BJ (cell line): ENCODE measurements at regions of chr6 and their contacts with region 1.

Region 1: GRCh38 chr6:52049252-52050050 is 38.0 kb downstream of the PKHD1 start:
- DNase-seq: no peak
- H3K4me3 ChIP-seq: no peak overlapping the region
- H3K27me3 ChIP-seq: no peaks in the 10 kb centered on the region; the same call in 1 of the 2 replicates
- CTCF ChIP-seq: peak; percentile 71

Region 2: GRCh38 chr6:51814418-51814817 is 235.0 kb before region 1 on chr6:
- CTCF ChIA-PET with region 1: no interaction called
- POLR2A ChIA-PET with region 1: no interaction called
- DNase-seq: no peak
- H3K4me3 ChIP-seq: no peak overlapping the region
- H3K27me3 ChIP-seq: no peaks in the 10 kb centered on the region
- CTCF ChIP-seq: no peak

Region 3: GRCh38 chr6:52059821-52060220 is 10.4 kb after region 1 on chr6:
- CTCF ChIA-PET with region 1: interaction called, 34 read pairs
- POLR2A ChIA-PET with region 1: no interaction called
- DNase-seq: no peak
- H3K4me3 ChIP-seq: no peak overlapping the region
- H3K27me3 ChIP-seq: no peaks in the 10 kb centered on the region
- CTCF ChIP-seq: no peak